IMR-90 (cell line): ENCODE measurements at regions of chr2 and their contacts with region 1.

Region 1: GRCh38 chr2:25844089-25844488 is 34.2 kb downstream of the ASXL2 start:
- DNase-seq: peak; percentile 65
- ATAC-seq: peak; percentile 82
- H3K4me3 ChIP-seq: no peak overlapping the region
- H3K27ac ChIP-seq: peak overlapping the region; percentile 33; the same call in 1 of the 2 replicates
- H3K4me1 ChIP-seq: peaks cover 6% of the 10 kb centered on the region; the same call in 1 of the 2 replicates
- H3K27me3 ChIP-seq: no peaks in the 10 kb centered on the region
- CTCF ChIP-seq: no peak
- POLR2A ChIP-seq: no peak
- RAD21 ChIP-seq: no peak

Region 2: GRCh38 chr2:24287171-24287570 is 1556.9 kb before region 1 on chr2:
- CTCF ChIA-PET with region 1: interaction called, 10 read pairs
- POLR2A ChIA-PET with region 1: no interaction called
- dilution Hi-C with region 1: no loop called
- in situ Hi-C with region 1: no loop called
- intact Hi-C with region 1: no loop called
- DNase-seq: no peak
- ATAC-seq: no peak
- H3K4me3 ChIP-seq: no peak overlapping the region
- H3K27ac ChIP-seq: no peak overlapping the region
- H3K4me1 ChIP-seq: no peaks in the 10 kb centered on the region
- H3K27me3 ChIP-seq: no peaks in the 10 kb centered on the region
- CTCF ChIP-seq: no peak
- POLR2A ChIP-seq: no peak
- RAD21 ChIP-seq: no peak

Region 3: GRCh38 chr2:26492749-26493515 is 648.8 kb after region 1 on chr2:
- CTCF ChIA-PET with region 1: no interaction called
- POLR2A ChIA-PET with region 1: no interaction called
- dilution Hi-C with region 1: no loop called
- in situ Hi-C with region 1: no loop called
- intact Hi-C with region 1: no loop called
- DNase-seq: no peak
- ATAC-seq: no peak
- H3K4me3 ChIP-seq: no peak overlapping the region
- H3K27ac ChIP-seq: no peak overlapping the region
- H3K4me1 ChIP-seq: no peaks in the 10 kb centered on the region
- H3K27me3 ChIP-seq: peaks cover 48% of the 10 kb centered on the region
- CTCF ChIP-seq: no peak
- POLR2A ChIP-seq: no peak
- RAD21 ChIP-seq: no peak